ENCODE measurements at regions of chr18 and their contacts with region 1.

Region 1: GRCh38 chr18:50819728-50820378 is at the start of gene MRO:
- DNase-seq: peak; percentile 33
- H3K4me3 ChIP-seq: peak within 1 kb of the TSS; percentile 1 to 57 (median 33)
- H3K27ac ChIP-seq: peak within 1 kb of the TSS in 2 of 4 donors; percentile 44 to 69
- H3K4me1 ChIP-seq: peaks cover 0 to 46% (median 11%) of the 10 kb centered on the region in 3 donors
- H3K27me3 ChIP-seq: no peaks in the 10 kb centered on the region
- CTCF ChIP-seq: peak; percentile 83 to 92 (median 88)
- POLR2A ChIP-seq: no peak
- total RNA-seq, gene MRO: 0.13 to 1.7 (median 0.83) TPM

Region 2: GRCh38 chr18:51051105-51051712 is 231.4 kb after region 1 on chr18:
- intact Hi-C with region 1: loop called (anchors 5 kb)
- DNase-seq: no peak
- H3K4me3 ChIP-seq: no peak overlapping the region
- H3K27ac ChIP-seq: no peak overlapping the region
- H3K4me1 ChIP-seq: peaks cover 0 to 15% (median 0%) of the 10 kb centered on the region in 3 donors
- H3K27me3 ChIP-seq: no peaks in the 10 kb centered on the region
- CTCF ChIP-seq: peak; percentile 60 to 78 (median 70)
- POLR2A ChIP-seq: no peak